CD8-positive, alpha-beta T cell (primary cell): ENCODE measurements at regions of chr19 and their contacts with region 1.

Region 1: GRCh38 chr19:48391107-48391986 is at the start of gene KDELR1:
- DNase-seq: peak; percentile 53 to 86 (median 76)
- ATAC-seq: peak; percentile 85
- H3K4me3 ChIP-seq: peak within 1 kb of the TSS; percentile 75 to 81
- H3K4me3 Mint-ChIP-seq: peak within 1 kb of the TSS; percentile 92
- H3K27ac ChIP-seq: peak within 1 kb of the TSS; percentile 87 to 92
- H3K27ac Mint-ChIP-seq: peak within 1 kb of the TSS; percentile 95
- H3K4me1 ChIP-seq: peaks cover 37% of the 10 kb centered on the region
- H3K4me1 Mint-ChIP-seq: peaks cover 39% of the 10 kb centered on the region
- H3K27me3 ChIP-seq: peaks cover 24 to 31% of the 10 kb centered on the region in 2 experiments
- H3K27me3 Mint-ChIP-seq: peaks cover 15% of the 10 kb centered on the region
- CTCF ChIP-seq: peak; percentile 96
- total RNA-seq, gene KDELR1: 29.7 to 33.1 TPM

Region 2: GRCh38 chr19:48271531-48272151 is 119.7 kb before region 1 on chr19:
- CTCF ChIA-PET with region 1: interaction called, 3 read pairs
- POLR2A ChIA-PET with region 1: no interaction called
- intact Hi-C with region 1: loop called in 1 of 2 experiments (anchors 2 kb)
- DNase-seq: peak in 3 of 9 experiments; percentile 10 to 55 (median 30)
- ATAC-seq: peak; percentile 23
- H3K4me3 ChIP-seq: peak overlapping the region; percentile 41 to 43
- H3K4me3 Mint-ChIP-seq: peak overlapping the region; percentile 82
- H3K27ac ChIP-seq: no peak overlapping the region
- H3K27ac Mint-ChIP-seq: no peak overlapping the region
- H3K4me1 ChIP-seq: peaks cover 4% of the 10 kb centered on the region
- H3K4me1 Mint-ChIP-seq: peaks cover 13% of the 10 kb centered on the region
- H3K27me3 ChIP-seq: peaks cover 0 to 14% of the 10 kb centered on the region in 2 experiments
- H3K27me3 Mint-ChIP-seq: peaks cover 12% of the 10 kb centered on the region
- CTCF ChIP-seq: no peak

Region 3: DNA sequence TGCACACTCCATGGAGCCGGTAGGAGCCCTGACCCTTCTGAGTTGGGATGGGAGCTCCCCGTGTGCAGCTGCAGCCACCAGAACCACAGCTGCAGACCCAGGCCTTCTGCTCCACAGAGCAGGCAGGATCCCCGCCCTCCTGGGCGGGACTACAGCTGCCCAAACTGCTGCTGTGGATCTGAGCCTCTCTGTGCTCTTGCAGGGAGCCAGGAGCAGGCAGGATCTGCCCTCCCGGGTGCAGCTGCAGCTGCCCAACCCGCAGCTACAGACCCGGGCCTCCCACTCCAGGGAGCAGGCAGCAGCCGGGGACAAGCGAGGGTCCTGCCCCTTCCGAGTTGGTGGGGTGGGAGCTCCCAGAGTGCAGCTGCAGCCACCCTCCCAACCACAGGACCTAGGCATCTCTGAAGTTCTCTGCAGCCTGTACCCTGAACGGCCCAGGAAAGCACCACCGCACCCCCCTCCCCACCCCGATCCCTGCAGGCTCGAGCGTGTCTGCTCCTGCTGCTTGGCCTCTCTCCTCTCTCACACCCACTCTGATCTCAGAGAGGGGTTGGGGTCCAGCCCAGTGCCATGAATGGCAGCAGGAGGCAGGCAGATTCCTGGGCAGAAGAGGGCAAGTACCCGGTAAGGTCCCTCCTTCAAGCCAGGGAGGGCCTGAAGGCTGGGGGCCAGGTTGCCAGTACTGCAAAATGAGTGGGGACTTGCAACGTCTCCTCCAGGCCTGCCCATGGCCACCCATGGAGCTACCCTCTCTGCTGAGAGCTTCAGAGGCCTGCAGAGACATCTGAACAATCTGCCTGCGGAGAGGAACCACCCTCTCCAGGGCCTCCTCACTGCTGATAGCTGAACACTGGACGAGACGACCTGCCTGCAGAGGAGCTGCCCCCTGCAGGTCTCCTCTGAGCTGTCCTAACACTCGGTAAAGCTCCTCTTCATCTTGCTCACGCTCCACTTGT is 82.4 kb before region 1 on chr19:
- CTCF ChIA-PET with region 1: interaction called, 3 read pairs
- POLR2A ChIA-PET with region 1: no interaction called
- intact Hi-C with region 1: loop called in 1 of 2 experiments (anchors 1 kb)
- DNase-seq: no peak
- ATAC-seq: no peak
- H3K4me3 ChIP-seq: no peak overlapping the region
- H3K4me3 Mint-ChIP-seq: no peak overlapping the region
- H3K27ac ChIP-seq: no peak overlapping the region
- H3K27ac Mint-ChIP-seq: no peak overlapping the region
- H3K4me1 ChIP-seq: no peaks in the 10 kb centered on the region
- H3K4me1 Mint-ChIP-seq: no peaks in the 10 kb centered on the region
- H3K27me3 ChIP-seq: no peaks in the 10 kb centered on the region
- H3K27me3 Mint-ChIP-seq: no peaks in the 10 kb centered on the region
- CTCF ChIP-seq: no peak

Region 4: DNA sequence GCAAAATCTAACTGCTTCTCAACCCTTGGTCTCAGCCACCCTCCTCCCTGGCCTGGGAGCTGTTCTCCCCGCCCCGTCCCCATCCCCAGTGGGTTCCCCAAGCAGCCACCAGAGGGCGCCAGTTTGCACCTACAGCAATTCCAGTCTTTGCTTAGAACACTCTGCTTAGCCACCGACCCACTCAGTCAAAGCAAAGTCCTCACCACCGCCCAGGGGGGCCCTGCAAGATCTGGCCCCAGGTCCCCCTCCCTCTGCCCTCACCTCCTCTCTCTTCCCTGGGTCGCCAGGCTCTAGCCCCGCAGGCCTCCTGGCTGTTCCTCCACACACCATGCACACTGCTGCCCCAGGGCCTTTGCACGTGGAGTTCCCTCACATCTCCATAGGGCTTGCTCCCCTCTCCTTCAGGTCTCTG is 40.0 kb before region 1 on chr19:
- CTCF ChIA-PET with region 1: interaction called, 12 read pairs
- POLR2A ChIA-PET with region 1: no interaction called
- intact Hi-C with region 1: no loop called
- DNase-seq: peak; percentile 62 to 86 (median 78)
- ATAC-seq: peak; percentile 83
- H3K4me3 ChIP-seq: no peak overlapping the region
- H3K4me3 Mint-ChIP-seq: no peak overlapping the region
- H3K27ac ChIP-seq: no peak overlapping the region
- H3K27ac Mint-ChIP-seq: no peak overlapping the region
- H3K4me1 ChIP-seq: no peaks in the 10 kb centered on the region
- H3K4me1 Mint-ChIP-seq: peaks cover 3% of the 10 kb centered on the region
- H3K27me3 ChIP-seq: no peaks in the 10 kb centered on the region
- H3K27me3 Mint-ChIP-seq: no peaks in the 10 kb centered on the region
- CTCF ChIP-seq: peak; percentile 62

Region 5: GRCh38 chr19:48419158-48419920 is 28.0 kb after region 1 on chr19:
- CTCF ChIA-PET with region 1: interaction called, 16 read pairs
- POLR2A ChIA-PET with region 1: interaction called, 4 read pairs
- intact Hi-C with region 1: no loop called
- DNase-seq: peak; percentile 43 to 87 (median 72)
- ATAC-seq: peak; percentile 64
- H3K4me3 ChIP-seq: peak overlapping the region in 1 of 2 experiments; percentile 34
- H3K4me3 Mint-ChIP-seq: peak overlapping the region; percentile 77
- H3K27ac ChIP-seq: no peak overlapping the region
- H3K27ac Mint-ChIP-seq: no peak overlapping the region
- H3K4me1 ChIP-seq: peaks cover 16% of the 10 kb centered on the region
- H3K4me1 Mint-ChIP-seq: peaks cover 19% of the 10 kb centered on the region
- H3K27me3 ChIP-seq: peaks cover 0 to 2% of the 10 kb centered on the region in 2 experiments
- H3K27me3 Mint-ChIP-seq: peaks cover 25% of the 10 kb centered on the region
- CTCF ChIP-seq: no peak

Region 6: DNA sequence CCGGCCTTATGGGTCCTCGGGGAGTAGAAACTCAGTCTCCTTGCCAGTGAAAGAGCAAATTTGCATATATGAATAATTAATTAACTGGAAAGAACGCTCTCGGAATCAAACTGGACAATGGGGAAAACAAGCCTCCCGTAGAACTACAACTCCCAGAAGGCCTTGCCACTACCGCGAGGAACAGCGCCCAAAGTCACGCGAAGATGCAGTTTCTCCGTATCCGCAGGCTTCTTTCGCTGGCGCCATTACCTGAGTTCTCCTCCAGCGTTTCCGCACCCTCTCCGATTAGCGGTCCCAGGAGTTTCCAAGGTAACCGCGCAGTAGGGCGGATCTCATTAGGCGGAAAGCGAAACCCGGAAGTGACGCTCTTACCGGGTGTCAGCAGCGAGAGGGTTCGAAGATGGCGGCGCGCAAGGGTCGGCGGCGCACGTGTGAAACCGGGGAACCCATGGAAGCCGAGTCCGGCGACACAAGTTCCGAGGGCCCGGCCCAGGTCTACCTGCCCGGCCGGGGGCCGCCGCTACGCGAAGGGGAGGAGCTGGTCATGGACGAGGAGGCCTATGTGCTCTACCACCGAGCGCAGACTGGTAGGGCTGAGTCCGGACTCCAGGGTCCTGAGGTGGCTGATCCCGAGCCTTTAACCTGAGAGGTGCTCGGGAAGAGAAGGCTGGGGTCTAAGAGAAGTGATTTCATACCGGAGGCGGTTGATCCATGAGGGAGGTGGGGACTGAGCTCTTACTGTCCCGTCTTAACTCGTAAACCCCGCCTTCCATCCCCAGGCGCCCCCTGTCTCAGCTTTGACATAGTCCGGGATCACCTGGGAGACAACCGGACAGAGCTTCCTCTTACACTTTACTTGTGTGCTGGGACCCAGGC is 54.5 kb after region 1 on chr19 and contains the start of gene GRWD1:
- CTCF ChIA-PET with region 1: no interaction called
- POLR2A ChIA-PET with region 1: no interaction called
- intact Hi-C with region 1: loop called (anchors 1 to 2 kb)
- DNase-seq: peak; percentile 83 to 98 (median 91)
- ATAC-seq: peak; percentile 93
- H3K4me3 ChIP-seq: peak within 1 kb of the TSS; percentile 82 to 90
- H3K4me3 Mint-ChIP-seq: peak within 1 kb of the TSS; percentile 93
- H3K27ac ChIP-seq: peak within 1 kb of the TSS; percentile 79 to 89
- H3K27ac Mint-ChIP-seq: peak within 1 kb of the TSS; percentile 95
- H3K4me1 ChIP-seq: peaks cover 24% of the 10 kb centered on the region
- H3K4me1 Mint-ChIP-seq: peaks cover 40% of the 10 kb centered on the region
- H3K27me3 ChIP-seq: peaks cover 19 to 22% of the 10 kb centered on the region in 2 experiments
- H3K27me3 Mint-ChIP-seq: peaks cover 18% of the 10 kb centered on the region
- CTCF ChIP-seq: no peak
- total RNA-seq, gene GRWD1: 36.1 to 41.7 TPM

Region 7: GRCh38 chr19:48468775-48469288 is 77.5 kb after region 1 on chr19:
- CTCF ChIA-PET with region 1: no interaction called
- POLR2A ChIA-PET with region 1: no interaction called
- intact Hi-C with region 1: loop called in 1 of 2 experiments (anchors 1 kb)
- DNase-seq: peak; percentile 98 to 100 (median 99)
- ATAC-seq: peak; percentile 85
- H3K4me3 ChIP-seq: peak overlapping the region; percentile 83 to 95
- H3K4me3 Mint-ChIP-seq: peak overlapping the region; percentile 90
- H3K27ac ChIP-seq: peak overlapping the region; percentile 75 to 90
- H3K27ac Mint-ChIP-seq: peak overlapping the region; percentile 85
- H3K4me1 ChIP-seq: peaks cover 15% of the 10 kb centered on the region
- H3K4me1 Mint-ChIP-seq: peaks cover 21% of the 10 kb centered on the region
- H3K27me3 ChIP-seq: no peaks in the 10 kb centered on the region
- H3K27me3 Mint-ChIP-seq: no peaks in the 10 kb centered on the region
- CTCF ChIP-seq: no peak

Region 8: GRCh38 chr19:48646001-48646721 is 254.8 kb after region 1 on chr19 and contains the start of gene CA11:
- CTCF ChIA-PET with region 1: no interaction called
- POLR2A ChIA-PET with region 1: no interaction called
- intact Hi-C with region 1: no loop called
- DNase-seq: peak; percentile 87 to 97 (median 92)
- ATAC-seq: peak; percentile 84
- H3K4me3 ChIP-seq: peak within 1 kb of the TSS; percentile 58 to 98
- H3K4me3 Mint-ChIP-seq: peak within 1 kb of the TSS; percentile 93
- H3K27ac ChIP-seq: peak within 1 kb of the TSS; percentile 80 to 88
- H3K27ac Mint-ChIP-seq: peak within 1 kb of the TSS; percentile 99
- H3K4me1 ChIP-seq: peaks cover 32% of the 10 kb centered on the region
- H3K4me1 Mint-ChIP-seq: peaks cover 47% of the 10 kb centered on the region
- H3K27me3 ChIP-seq: no peaks in the 10 kb centered on the region
- H3K27me3 Mint-ChIP-seq: no peaks in the 10 kb centered on the region
- CTCF ChIP-seq: peak; percentile 77
- total RNA-seq, gene CA11: 10.3 to 11.2 TPM